ENCODE measurements at regions of chr19 and their contacts with region 1.

Region 1: DNA sequence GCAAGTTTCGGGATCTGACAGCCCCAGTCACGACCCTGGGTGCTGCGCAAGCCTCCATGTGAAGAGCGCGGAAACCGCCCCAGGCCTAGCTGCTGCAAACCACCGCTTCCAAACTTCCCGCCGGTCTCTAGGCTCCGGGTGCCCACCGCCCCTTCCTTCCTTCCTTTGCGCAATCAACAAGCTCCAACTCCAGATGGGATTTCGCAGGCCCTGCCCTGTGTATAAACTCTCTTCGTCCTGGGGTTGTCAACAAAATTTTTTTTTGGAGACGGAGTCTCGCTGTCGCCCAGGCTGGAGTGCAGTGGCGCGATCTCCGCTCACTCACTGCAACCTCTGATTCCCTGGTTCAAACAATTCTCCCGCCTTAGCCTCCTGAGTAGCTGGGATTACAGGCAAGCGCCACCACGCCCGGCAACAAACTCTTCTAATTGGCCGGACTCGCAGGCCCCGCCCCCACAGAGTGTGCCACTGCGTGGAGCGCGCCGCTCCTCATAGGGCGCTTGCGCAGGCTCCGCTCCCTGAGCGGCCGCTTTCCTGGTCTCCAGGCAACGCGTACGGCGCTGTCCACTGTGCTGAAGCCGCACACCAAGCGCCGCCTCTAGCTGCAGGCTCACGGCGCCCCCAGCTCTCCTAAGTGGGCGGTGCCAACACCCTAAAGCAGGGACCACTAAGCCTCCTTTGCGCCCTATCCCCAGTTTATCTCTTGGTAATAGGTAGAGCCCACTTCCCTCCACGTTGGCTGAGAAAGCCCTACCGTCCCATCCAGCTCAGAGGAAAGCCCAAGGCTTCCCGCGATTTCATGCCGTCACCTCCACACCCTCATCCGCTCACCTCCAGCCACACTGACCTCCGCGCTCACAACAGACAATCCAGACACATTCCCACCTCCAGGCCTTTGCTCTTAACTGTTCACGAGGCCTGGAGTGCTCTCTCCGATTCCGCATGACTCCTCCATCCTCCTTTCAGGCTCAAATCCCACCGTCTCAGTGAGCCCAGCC is 5.5 kb upstream of the QTRT1 start:
- DNase-seq: peak; percentile 95 to 99 (median 96)
- H3K4me3 ChIP-seq: peak overlapping the region in 1 of 4 donors; percentile 13
- H3K27ac ChIP-seq: no peak overlapping the region
- H3K4me1 ChIP-seq: peaks cover 0 to 10% of the 10 kb centered on the region in 2 donors
- H3K27me3 ChIP-seq: no peaks in the 10 kb centered on the region
- CTCF ChIP-seq: no peak
- POLR2A ChIP-seq: no peak

Region 2: GRCh38 chr19:10653715-10654492 is 41.8 kb before region 1 on chr19 and contains the start of gene ILF3:
- intact Hi-C with region 1: loop called (anchors 5 kb)
- DNase-seq: peak; percentile 100
- H3K4me3 ChIP-seq: peak within 1 kb of the TSS; percentile 90 to 99 (median 93)
- H3K27ac ChIP-seq: peak within 1 kb of the TSS; percentile 98 to 100 (median 99)
- H3K4me1 ChIP-seq: peaks cover 31 to 52% of the 10 kb centered on the region in 2 donors
- H3K27me3 ChIP-seq: no peaks in the 10 kb centered on the region
- CTCF ChIP-seq: peak in 1 of 6 experiments; percentile 12
- POLR2A ChIP-seq: peak; percentile 96 to 98
- total RNA-seq, gene ILF3: 75.0 to 254 (median 115) TPM

Region 3: GRCh38 chr19:11355160-11356073 is 659.7 kb after region 1 on chr19 and contains the start of gene PLPPR2:
- intact Hi-C with region 1: no loop called
- DNase-seq: peak; percentile 93 to 98 (median 96)
- H3K4me3 ChIP-seq: peak within 1 kb of the TSS in 2 of 4 donors; percentile 83 to 88
- H3K27ac ChIP-seq: peak within 1 kb of the TSS in 3 of 5 donors; percentile 34 to 60 (median 44)
- H3K4me1 ChIP-seq: peaks cover 8 to 9% of the 10 kb centered on the region in 2 donors
- H3K27me3 ChIP-seq: no peaks in the 10 kb centered on the region
- CTCF ChIP-seq: no peak
- POLR2A ChIP-seq: peak; percentile 65 to 71
- total RNA-seq, gene PLPPR2: 8.5 to 46.8 (median 42.6) TPM

Measured in adrenal gland (tissue), 19 donors.